ENCODE measurements at regions of chr12 and their contacts with region 1.

Region 1: DNA sequence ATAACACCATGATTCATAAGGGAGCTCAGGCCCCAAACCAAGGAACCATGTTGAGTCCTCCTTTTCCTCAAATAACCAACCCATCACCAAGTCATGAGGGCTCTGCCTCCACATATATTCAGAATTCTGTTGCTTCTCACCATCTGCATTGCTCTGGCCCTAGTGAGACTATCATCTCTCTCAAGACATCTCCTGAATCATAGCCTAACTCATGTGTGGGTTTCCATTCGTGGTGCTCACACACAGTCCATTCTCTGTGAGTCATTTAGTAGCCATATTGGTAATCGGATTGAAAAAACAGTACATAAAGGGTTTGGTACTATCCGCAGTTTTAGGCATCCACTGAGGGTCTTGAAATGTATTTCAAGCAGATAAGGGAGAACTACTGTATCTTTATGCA is 5.1 kb upstream of the SLC38A2 start:
- DNase-seq: no peak
- ATAC-seq: no peak
- H3K4me3 ChIP-seq: no peak overlapping the region
- H3K4me3 Mint-ChIP-seq: no peak overlapping the region
- H3K27ac ChIP-seq: no peak overlapping the region
- H3K27ac Mint-ChIP-seq: no peak overlapping the region
- H3K4me1 ChIP-seq: peaks cover 18% of the 10 kb centered on the region
- H3K4me1 Mint-ChIP-seq: peaks cover 36% of the 10 kb centered on the region
- H3K27me3 ChIP-seq: no peaks in the 10 kb centered on the region
- H3K27me3 Mint-ChIP-seq: no peaks in the 10 kb centered on the region
- CTCF ChIP-seq: no peak

Region 2: DNA sequence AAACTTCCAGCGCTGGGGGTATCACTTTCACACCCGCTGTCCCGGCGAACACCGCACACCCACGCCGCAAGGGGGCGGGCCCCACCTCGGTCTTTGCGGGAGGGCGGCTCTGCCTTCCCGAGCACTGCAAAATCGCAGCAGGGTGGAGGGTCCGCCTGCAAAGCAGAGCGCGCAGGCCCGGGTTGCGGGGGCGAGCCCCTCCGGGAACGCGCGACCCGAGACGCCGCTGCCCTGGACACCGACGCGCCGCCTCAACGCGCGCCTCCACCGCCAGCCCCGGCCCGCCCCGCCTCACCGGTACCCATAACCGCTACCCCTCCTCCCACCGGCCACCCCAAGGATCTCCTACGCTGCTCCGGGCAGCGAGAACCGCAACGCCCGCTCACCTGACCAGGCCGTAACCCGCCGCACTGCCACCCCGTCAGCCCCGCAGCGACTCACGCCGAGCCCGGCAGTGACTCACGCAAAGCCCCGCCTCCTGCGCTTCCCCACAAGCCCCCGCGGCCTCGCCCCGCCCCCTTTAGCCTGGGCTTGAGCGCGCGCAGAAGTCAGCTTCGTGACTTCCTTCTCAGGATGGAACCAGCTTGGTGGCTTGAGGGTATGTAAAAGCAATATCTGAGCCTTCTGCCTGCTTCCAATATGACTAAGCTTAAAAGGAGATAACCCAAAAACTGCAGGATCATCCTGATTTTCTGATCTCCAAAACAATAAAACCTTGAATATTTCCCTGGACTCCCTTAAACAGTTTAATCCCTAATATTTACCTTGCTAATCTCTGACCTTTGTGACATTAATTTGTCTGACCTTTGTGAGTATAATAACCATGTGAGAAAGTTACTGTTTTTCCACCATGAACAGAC is 1328.1 kb after region 1 on chr12 and contains the start of gene RPAP3:
- CTCF ChIA-PET with region 1: no interaction called
- POLR2A ChIA-PET with region 1: no interaction called
- intact Hi-C with region 1: loop called in 1 of 2 experiments (anchors 5 kb)
- DNase-seq: peak; percentile 92 to 99 (median 97)
- ATAC-seq: peak; percentile 93
- H3K4me3 ChIP-seq: peak within 1 kb of the TSS; percentile 77
- H3K4me3 Mint-ChIP-seq: peak within 1 kb of the TSS; percentile 99
- H3K27ac ChIP-seq: peak within 1 kb of the TSS; percentile 81
- H3K27ac Mint-ChIP-seq: peak within 1 kb of the TSS; percentile 94
- H3K4me1 ChIP-seq: peaks cover 37% of the 10 kb centered on the region
- H3K4me1 Mint-ChIP-seq: peaks cover 68% of the 10 kb centered on the region
- H3K27me3 ChIP-seq: no peaks in the 10 kb centered on the region
- H3K27me3 Mint-ChIP-seq: no peaks in the 10 kb centered on the region
- CTCF ChIP-seq: peak; percentile 76
- total RNA-seq, gene RPAP3: 24.6 to 26.4 TPM

Measured in CD4-positive, alpha-beta T cell (primary cell).